RWPE1 (cell line): ENCODE measurements at regions of chr20 and their contacts with region 1.

Region 1: GRCh38 chr20:20664795-20665589 is 47.5 kb downstream of the RALGAPA2 start:
- DNase-seq: peak; percentile 27
- H3K27ac ChIP-seq: no peak overlapping the region
- CTCF ChIP-seq: peak; percentile 83

Region 2: GRCh38 chr20:20518263-20518662 is 146.7 kb before region 1 on chr20:
- CTCF ChIA-PET with region 1: no interaction called
- POLR2A ChIA-PET with region 1: no interaction called
- DNase-seq: no peak
- H3K27ac ChIP-seq: no peak overlapping the region
- CTCF ChIP-seq: no peak

Region 3: GRCh38 chr20:20593447-20594170 is 71.4 kb before region 1 on chr20:
- CTCF ChIA-PET with region 1: no interaction called
- POLR2A ChIA-PET with region 1: no interaction called
- DNase-seq: peak; percentile 46
- H3K27ac ChIP-seq: no peak overlapping the region
- CTCF ChIP-seq: peak; percentile 51

Region 4: DNA sequence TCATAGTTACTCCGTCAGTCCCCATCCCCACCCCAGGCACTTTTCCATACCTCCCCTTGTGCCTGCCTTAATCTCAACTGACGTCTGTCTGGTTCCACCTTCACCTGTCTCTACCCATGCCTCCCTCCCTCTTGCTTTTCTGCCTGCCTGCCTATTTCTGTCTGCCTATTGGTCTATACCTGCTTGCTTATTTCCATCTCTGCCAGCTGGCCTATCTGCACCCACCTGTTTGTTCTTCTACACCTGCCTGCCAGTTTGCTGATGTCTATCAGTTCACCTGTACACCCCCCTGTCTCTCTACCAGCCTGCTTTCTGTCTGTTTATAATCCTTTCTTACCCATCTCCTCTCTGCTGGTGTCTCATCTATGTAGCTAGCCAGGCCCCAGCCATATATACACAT is 40.1 kb before region 1 on chr20:
- CTCF ChIA-PET with region 1: no interaction called
- POLR2A ChIA-PET with region 1: no interaction called
- DNase-seq: no peak
- H3K27ac ChIP-seq: no peak overlapping the region
- CTCF ChIP-seq: no peak

Region 5: GRCh38 chr20:20765696-20766365 is 100.8 kb after region 1 on chr20:
- CTCF ChIA-PET with region 1: no interaction called
- POLR2A ChIA-PET with region 1: no interaction called
- DNase-seq: no peak
- H3K27ac ChIP-seq: no peak overlapping the region
- CTCF ChIP-seq: no peak

Region 6: DNA sequence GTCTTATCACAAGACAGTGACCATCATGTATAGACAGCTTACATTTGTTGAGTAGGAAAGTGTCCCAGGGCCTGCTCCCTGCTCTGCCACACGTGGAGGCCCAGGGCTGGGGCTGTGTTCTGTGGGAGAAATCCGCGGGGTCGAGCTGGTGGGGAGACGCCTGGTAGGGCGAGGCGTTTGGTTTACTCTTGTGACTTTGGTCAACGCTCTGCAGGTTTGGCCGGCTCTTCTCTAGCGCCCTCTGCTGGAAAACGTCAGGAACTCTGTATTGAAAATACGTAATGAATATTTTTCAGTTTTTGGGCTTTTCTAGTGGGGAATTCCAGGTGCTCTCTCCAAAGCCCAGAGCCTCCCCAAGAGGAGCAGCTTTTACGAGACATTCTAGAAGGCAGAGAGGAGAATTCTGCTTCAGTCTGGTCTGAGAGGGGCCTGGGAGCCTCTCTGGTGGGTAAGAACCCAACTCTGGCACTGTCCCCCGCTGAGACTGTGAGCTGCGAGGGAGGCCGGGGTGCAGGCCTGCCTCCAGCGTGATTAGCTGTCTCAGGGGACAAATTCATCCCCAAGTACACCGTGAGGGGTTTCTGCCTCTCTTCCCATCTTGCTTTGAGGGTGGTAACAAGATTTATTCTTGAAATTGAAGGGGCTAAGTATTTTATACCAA is 160.1 kb after region 1 on chr20:
- CTCF ChIA-PET with region 1: interaction called, 10 read pairs
- POLR2A ChIA-PET with region 1: no interaction called
- DNase-seq: peak; percentile 46
- H3K27ac ChIP-seq: no peak overlapping the region
- CTCF ChIP-seq: peak; percentile 93